ENCODE measurements at regions of chr5 and their contacts with region 1.

Region 1: GRCh38 chr5:88729084-88729828 is 153.7 kb downstream of the MEF2C start:
- DNase-seq: peak; percentile 53 to 73
- H3K4me3 ChIP-seq: no peak overlapping the region
- H3K27ac ChIP-seq: peak overlapping the region; percentile 4 to 15
- H3K4me1 ChIP-seq: peaks cover 0 to 45% (median 27%) of the 10 kb centered on the region in 4 donors
- H3K27me3 ChIP-seq: no peaks in the 10 kb centered on the region
- CTCF ChIP-seq: peak; percentile 72 to 83

Region 2: DNA sequence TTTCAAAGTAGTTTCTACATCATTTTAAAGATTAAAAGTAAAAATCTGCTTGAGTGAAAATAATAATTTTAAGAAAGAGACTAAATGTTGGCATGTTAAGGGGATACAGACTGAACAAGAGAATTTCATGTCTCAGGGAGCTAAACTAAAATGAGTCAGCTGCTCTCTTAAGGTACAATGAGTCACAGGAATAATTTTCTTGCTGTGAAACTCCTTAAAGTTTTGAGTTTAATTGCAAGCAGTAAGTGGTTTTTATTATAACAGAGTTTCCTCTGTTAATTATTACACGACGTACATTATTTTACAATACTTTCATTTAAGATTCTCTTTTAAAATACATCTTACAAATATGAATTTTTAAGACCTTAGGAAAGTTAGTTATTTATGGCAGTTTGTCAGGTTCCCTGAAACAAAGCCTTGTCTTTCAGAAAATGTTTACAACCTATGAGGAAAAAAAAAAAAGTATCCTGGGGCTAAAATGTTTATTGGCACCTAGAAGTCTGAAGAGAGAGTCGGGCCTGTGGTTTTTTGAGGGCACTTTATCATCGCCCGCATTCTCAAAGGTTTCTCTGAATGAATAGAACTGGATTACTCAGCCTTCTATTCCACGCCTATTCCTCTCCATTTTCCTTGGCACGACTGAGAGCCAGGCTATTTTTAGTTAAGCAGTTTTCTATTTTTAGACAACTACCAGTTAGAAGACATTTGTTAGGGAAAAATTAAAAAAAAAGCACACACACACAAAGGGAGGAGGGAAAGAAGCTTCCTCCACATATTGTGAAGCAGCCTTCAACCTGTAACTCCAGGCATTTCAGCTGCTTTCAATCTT is 56.3 kb after region 1 on chr5:
- intact Hi-C with region 1: loop called (anchors 10 kb)
- DNase-seq: peak in 1 of 2 donors; percentile 44
- H3K4me3 ChIP-seq: peak overlapping the region; percentile 2 to 6
- H3K27ac ChIP-seq: peak overlapping the region; percentile 37 to 59
- H3K4me1 ChIP-seq: peaks cover 0 to 47% (median 16%) of the 10 kb centered on the region in 4 donors
- H3K27me3 ChIP-seq: no peaks in the 10 kb centered on the region
- CTCF ChIP-seq: peak in 1 of 2 experiments; percentile 9

Region 3: GRCh38 chr5:88883059-88883835 is 154.0 kb after region 1 on chr5 and contains the start of gene MEF2C:
- intact Hi-C with region 1: loop called (anchors 2 kb)
- DNase-seq: peak; percentile 77 to 91
- H3K4me3 ChIP-seq: peak within 1 kb of the TSS; percentile 60 to 73
- H3K27ac ChIP-seq: peak within 1 kb of the TSS; percentile 93 to 97
- H3K4me1 ChIP-seq: peaks cover 0 to 42% (median 5%) of the 10 kb centered on the region in 4 donors
- H3K27me3 ChIP-seq: no peaks in the 10 kb centered on the region
- CTCF ChIP-seq: no peak

Region 4: DNA sequence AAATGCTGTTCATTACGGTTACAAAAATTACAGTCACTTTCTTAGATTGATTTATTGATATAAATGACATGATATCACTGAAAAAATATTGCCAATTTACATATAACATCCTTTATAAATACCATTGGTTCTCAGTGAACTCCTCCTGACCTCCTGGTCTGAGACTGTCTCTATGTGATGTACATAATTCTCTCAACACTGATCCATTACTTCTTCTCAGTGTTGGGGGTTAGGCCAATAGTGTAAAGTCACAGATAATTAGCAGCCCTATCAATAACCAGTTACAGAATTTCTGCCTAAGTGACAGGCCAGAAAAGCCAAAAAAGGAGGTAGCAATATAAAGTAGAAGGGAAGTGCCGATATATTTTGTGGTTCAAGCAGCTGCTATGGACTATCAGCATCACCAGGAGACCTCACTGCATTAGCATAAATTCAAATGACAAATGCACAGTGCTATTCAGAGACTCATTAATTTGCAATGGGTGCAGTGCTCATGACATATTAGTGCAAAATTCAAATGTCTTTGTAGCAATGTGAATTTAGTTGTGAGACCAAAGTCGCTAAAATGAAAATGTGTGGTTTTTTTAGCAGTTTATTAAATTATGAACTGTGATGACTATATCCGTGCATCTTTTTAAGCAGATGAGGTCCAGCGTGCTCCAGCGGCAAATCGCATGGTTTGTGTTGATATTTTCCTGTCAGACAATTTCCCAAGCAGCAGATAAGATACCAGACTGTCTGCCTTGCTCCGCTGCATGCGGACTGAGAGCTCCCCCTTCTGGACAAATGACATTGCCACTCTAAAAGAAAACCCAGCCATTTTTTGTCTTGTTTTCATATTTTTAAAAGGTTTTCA is 1535.7 kb after region 1 on chr5:
- intact Hi-C with region 1: loop called (anchors 2 kb)
- DNase-seq: peak; percentile 34 to 75
- H3K4me3 ChIP-seq: peak overlapping the region in 1 of 2 donors; percentile 8
- H3K27ac ChIP-seq: no peak overlapping the region
- H3K4me1 ChIP-seq: peaks cover 0 to 22% (median 0%) of the 10 kb centered on the region in 4 donors
- H3K27me3 ChIP-seq: no peaks in the 10 kb centered on the region
- CTCF ChIP-seq: peak; percentile 76 to 96

Region 5: DNA sequence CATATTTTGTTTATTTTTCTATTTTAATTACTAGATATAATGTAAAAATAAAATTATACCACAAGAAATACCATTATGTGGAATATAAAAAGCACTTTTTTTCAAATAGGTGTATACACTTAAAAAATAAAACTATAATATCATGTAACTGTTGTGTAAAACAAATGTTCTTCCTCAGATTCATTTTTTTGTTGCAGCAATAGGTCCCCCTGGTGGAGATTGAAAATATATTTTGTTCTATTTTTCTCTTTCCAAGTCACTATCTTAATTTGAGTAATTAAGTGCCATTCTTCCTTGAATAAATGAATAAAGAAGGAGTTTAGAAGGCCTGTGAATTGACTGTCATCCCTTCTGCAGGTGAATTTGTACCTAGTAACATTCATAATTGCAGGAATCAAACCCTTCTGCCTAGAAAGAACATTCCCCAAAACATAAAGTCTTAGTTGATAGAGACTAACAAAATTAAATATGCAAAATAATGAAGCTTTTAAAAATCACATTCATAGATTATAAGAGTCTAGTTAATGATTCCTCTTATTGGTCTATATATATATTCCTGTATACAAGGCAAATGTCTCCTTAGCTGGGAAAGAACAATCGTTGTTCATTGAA is 1656.9 kb after region 1 on chr5:
- intact Hi-C with region 1: loop called (anchors 10 kb)
- DNase-seq: no peak
- H3K4me3 ChIP-seq: no peak overlapping the region
- H3K27ac ChIP-seq: no peak overlapping the region
- H3K4me1 ChIP-seq: no peaks in the 10 kb centered on the region
- H3K27me3 ChIP-seq: no peaks in the 10 kb centered on the region
- CTCF ChIP-seq: peak; percentile 47